Gastrocnemius medialis (tissue), 4 donors: ENCODE measurements at regions of chr7 and their contacts with region 1.

Region 1: GRCh38 chr7:43489257-43489656 is 93.7 kb upstream of the STK17A start:
- DNase-seq: no peak
- ATAC-seq: no peak
- H3K4me3 ChIP-seq: no peak overlapping the region
- H3K27ac ChIP-seq: no peak overlapping the region
- H3K4me1 ChIP-seq: no peaks in the 10 kb centered on the region
- H3K27me3 ChIP-seq: no peaks in the 10 kb centered on the region
- CTCF ChIP-seq: no peak
- POLR2A ChIP-seq: no peak

Region 2: DNA sequence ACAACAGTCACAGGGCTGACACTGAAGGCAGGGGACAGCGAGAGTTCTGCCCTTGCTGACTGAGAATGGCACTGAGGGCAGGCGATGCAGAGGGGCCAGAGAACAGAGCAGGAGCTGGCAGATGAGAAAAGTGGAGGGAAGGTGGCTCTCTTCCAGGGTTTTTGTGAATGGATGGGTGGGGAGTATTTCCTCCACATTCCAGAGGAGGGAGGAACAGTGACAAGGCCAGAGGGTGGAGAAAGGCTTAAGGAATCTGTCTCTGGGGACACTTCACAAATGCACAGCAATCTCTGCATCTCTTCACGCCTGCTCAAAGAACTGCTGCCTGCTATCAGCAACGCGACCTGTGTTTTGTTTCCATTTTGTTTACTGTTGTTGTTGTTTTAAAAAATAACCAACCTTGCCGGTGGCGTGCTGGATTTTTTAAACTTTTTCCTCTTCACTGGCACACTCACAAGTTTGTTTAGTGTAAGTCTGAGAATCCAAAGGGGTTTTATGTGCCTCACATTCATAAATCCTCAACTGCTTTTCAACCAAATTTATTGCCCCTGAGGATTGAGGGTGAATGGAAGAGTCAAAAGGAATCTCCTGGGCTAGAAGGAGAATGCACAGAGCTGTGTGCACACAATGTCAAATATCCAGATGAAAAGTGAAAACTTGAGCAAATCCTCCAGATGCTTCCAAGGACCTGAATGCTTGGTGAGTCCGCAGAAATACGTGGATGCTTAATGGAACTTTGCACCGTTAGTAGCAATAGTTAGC is 1381.6 kb before region 1 on chr7:
- in situ Hi-C with region 1: no loop called
- intact Hi-C with region 1: no loop called
- DNase-seq: peak in 1 of 2 donors; percentile 25
- ATAC-seq: peak; percentile 35 to 54
- H3K4me3 ChIP-seq: no peak overlapping the region
- H3K27ac ChIP-seq: no peak overlapping the region
- H3K4me1 ChIP-seq: peaks cover 12% of the 10 kb centered on the region in 2 donors
- H3K27me3 ChIP-seq: no peaks in the 10 kb centered on the region
- CTCF ChIP-seq: no peak
- POLR2A ChIP-seq: no peak

Region 3: DNA sequence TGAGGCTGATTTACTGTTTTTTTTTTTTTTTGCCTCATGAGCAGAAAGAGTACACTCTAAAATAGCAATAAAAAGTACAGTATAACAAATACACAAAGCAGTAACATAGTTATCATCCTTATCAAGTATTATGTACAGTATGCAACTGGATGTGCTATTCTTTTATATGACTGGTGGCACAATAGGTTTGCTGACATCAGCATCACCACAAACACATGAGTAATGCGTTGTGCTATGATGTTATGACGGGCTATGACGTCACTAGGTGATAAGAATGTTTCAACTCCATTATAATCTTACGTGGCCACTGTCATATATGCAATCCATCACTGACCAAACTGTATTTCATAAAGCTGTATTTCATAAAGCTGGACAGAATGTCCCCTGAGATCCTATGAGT is 1063.1 kb before region 1 on chr7:
- in situ Hi-C with region 1: no loop called
- intact Hi-C with region 1: no loop called
- DNase-seq: no peak
- ATAC-seq: no peak
- H3K4me3 ChIP-seq: no peak overlapping the region
- H3K27ac ChIP-seq: no peak overlapping the region
- H3K4me1 ChIP-seq: no peaks in the 10 kb centered on the region
- H3K27me3 ChIP-seq: no peaks in the 10 kb centered on the region
- CTCF ChIP-seq: no peak
- POLR2A ChIP-seq: no peak

Region 4: DNA sequence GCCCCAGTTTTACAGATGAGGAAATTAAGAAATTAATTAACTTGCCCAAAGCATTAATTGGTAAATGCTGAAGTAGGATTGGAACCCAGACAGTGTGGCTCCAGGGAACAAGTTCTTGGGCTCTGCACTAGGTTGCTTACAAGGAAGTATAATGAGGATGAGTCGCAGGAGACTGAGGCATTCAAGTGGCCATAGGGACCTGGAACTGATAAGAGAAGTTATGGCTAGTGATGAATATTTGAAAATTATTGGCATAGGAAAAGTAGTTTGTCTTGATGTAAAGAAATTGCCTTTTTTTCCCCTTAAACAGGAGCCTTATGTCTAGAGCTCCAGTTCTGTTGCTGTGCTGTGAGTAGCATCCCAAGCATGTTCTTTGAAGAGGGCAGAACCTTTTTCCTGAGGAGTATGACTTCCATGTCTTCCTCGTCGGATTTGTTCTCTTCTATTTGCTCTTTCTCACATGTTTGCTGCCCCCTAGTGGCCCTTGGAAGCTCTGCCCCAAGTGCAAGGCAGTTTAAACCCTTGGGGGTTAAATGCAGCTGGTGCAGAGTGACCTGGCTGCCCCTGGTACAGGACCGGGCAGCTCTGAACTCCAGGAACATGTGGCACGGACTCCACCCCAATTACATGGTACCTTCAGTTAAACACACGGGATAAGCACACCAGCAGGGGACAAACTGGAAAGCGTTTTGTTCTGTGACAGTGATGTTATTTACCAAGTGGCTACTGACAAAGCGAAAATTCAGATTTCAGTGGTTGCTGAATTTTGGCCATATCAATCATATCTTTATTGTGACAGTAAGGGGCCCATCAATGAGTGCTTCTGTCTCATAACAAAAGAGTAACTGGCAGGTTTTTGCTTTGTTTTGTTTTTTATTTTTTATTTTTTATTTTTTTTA is 228.0 kb before region 1 on chr7:
- in situ Hi-C with region 1: no loop called
- intact Hi-C with region 1: no loop called
- DNase-seq: peak; percentile 13 to 49
- ATAC-seq: peak; percentile 60 to 77
- H3K4me3 ChIP-seq: no peak overlapping the region
- H3K27ac ChIP-seq: no peak overlapping the region
- H3K4me1 ChIP-seq: no peaks in the 10 kb centered on the region
- H3K27me3 ChIP-seq: no peaks in the 10 kb centered on the region
- CTCF ChIP-seq: peak; percentile 60 to 88 (median 69)
- POLR2A ChIP-seq: no peak

Region 5: GRCh38 chr7:43540471-43540870 is 51.2 kb after region 1 on chr7:
- in situ Hi-C with region 1: no loop called
- intact Hi-C with region 1: loop called (anchors 2 kb)
- DNase-seq: no peak
- ATAC-seq: no peak
- H3K4me3 ChIP-seq: no peak overlapping the region
- H3K27ac ChIP-seq: no peak overlapping the region
- H3K4me1 ChIP-seq: no peaks in the 10 kb centered on the region
- H3K27me3 ChIP-seq: no peaks in the 10 kb centered on the region
- CTCF ChIP-seq: no peak
- POLR2A ChIP-seq: no peak